B cell (primary cell): ENCODE measurements at regions of chr12 and their contacts with region 1.

Region 1: DNA sequence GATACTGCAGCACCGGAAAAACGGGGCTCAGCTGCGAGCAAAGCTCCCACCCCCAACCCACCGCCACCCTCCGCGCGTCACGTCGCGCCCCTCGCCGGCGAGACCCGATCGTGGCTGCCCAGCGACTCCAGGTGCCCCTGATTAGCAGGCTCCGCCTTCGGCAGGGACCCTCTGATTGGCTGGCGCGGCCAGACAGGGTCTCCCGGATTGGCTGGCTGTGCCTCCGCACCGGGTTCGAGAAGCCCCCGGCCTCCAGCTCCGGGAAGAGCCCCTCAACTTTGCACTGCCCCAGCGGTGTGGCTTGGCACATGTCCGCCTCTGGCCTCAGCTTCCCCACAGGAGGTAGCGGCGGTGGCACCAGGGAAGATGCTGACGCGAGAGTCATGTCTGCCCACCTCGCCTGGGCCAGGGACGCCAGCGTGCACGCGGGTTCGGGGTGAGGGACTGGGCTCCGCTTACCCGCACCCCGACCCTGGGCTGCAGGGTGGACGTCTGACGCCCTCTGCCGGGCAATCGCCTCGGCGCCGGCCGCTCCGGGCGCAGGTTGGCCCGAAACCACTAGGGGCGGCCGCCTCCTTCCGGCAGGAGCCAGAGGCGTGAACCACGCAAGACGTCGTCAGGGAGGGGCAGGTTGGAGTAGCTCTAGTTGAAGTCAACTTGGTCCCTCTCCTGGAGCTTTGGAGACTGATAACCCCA is 498 bp upstream of the RHOF start:
- DNase-seq: peak; percentile 97
- ATAC-seq: peak; percentile 53
- H3K4me3 ChIP-seq: peak overlapping the region; percentile 30 to 97 (median 92)
- H3K4me3 Mint-ChIP-seq: peak overlapping the region; percentile 88
- H3K27ac ChIP-seq: peak overlapping the region; percentile 59 to 100
- H3K27ac Mint-ChIP-seq: peak overlapping the region; percentile 90
- H3K4me1 ChIP-seq: peaks cover 50 to 72% of the 10 kb centered on the region in 2 donors
- H3K4me1 Mint-ChIP-seq: peaks cover 65% of the 10 kb centered on the region
- H3K27me3 ChIP-seq: no peaks in the 10 kb centered on the region
- H3K27me3 Mint-ChIP-seq: no peaks in the 10 kb centered on the region
- CTCF ChIP-seq: peak; percentile 95

Region 2: DNA sequence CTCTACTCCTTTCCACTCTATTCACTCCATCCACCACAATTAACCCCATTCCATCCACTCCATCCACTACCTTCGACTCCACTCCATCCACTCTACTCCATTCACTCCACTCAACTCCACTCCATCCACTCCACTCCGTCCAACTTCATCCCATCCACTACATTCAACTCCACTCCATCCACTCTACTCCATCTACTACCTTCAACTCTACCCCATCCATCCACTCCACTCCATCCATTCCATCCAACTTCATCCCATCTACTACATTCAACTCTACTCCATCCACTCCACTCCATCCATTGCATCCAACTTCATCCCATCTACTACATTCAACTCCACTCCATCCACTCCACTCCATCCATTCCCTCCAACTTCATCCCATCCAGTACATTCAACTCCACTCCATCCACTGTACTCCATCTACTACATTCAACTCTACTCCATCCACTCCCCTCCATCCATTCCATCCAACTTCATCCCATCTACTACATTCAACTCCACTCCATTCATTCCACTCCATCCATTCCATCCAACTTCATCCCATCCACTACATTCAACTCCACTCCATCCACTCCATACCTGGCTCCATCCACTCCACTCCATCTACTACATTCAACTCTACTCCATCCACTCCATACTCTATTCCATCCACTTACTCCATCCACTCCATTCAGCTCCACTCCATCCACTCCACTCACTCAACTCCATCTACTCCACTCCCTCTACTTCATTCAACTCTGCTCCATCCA is 799.2 kb before region 1 on chr12:
- CTCF ChIA-PET with region 1: no interaction called
- POLR2A ChIA-PET with region 1: no interaction called
- intact Hi-C with region 1: no loop called
- DNase-seq: no peak
- ATAC-seq: no peak
- H3K4me3 ChIP-seq: no peak overlapping the region
- H3K4me3 Mint-ChIP-seq: no peak overlapping the region
- H3K27ac ChIP-seq: no peak overlapping the region
- H3K27ac Mint-ChIP-seq: no peak overlapping the region
- H3K4me1 ChIP-seq: no peaks in the 10 kb centered on the region
- H3K4me1 Mint-ChIP-seq: no peaks in the 10 kb centered on the region
- H3K27me3 ChIP-seq: peaks cover 0 to 11% (median 0%) of the 10 kb centered on the region in 4 experiments
- H3K27me3 Mint-ChIP-seq: peaks cover 18% of the 10 kb centered on the region
- CTCF ChIP-seq: peak; percentile 9

Region 3: DNA sequence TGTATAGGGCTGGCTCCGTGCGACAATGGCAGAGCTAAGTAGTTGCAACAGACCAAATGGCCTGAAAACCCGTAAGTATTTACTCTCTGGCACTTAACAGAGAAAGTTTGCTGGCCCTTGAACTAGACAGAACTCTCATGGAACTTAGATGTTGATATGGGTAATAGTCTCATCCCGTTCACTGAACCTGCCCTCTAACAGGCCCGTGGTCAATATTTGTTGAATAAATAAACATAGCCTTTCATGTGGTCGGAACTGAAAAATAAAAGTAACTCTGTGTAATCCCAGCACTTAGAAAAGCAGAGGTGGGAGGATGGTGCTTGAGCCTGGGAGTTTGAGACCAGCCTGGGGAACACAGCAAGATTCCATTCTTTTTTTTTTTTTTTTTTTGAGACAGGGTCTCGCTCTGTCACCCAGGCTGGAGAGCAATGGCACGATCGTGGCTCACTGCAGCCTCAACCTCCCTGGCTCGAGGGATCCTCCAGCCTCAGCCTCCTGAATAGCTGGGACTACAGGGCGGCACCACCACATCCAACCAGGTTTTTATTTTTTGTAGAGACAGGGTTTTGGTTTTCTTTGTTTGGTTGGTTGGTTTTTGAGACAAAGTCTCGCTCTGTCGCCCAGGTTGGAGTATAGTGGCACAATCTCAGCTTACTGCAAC is 242.9 kb before region 1 on chr12:
- CTCF ChIA-PET with region 1: interaction called, 21 read pairs
- POLR2A ChIA-PET with region 1: interaction called, 7 read pairs
- intact Hi-C with region 1: no loop called
- DNase-seq: no peak
- ATAC-seq: no peak
- H3K4me3 ChIP-seq: no peak overlapping the region
- H3K4me3 Mint-ChIP-seq: no peak overlapping the region
- H3K27ac ChIP-seq: no peak overlapping the region
- H3K27ac Mint-ChIP-seq: no peak overlapping the region
- H3K4me1 ChIP-seq: peaks cover 0 to 3% of the 10 kb centered on the region in 2 donors
- H3K4me1 Mint-ChIP-seq: peaks cover 2% of the 10 kb centered on the region
- H3K27me3 ChIP-seq: no peaks in the 10 kb centered on the region
- H3K27me3 Mint-ChIP-seq: no peaks in the 10 kb centered on the region
- CTCF ChIP-seq: no peak

Region 4: GRCh38 chr12:121697098-121697698 is 96.8 kb before region 1 on chr12:
- CTCF ChIA-PET with region 1: interaction called, 155 read pairs
- POLR2A ChIA-PET with region 1: interaction called, 7 read pairs
- intact Hi-C with region 1: loop called (anchors 1 kb)
- DNase-seq: peak; percentile 74
- ATAC-seq: peak; percentile 47
- H3K4me3 ChIP-seq: no peak overlapping the region
- H3K4me3 Mint-ChIP-seq: no peak overlapping the region
- H3K27ac ChIP-seq: no peak overlapping the region
- H3K27ac Mint-ChIP-seq: no peak overlapping the region
- H3K4me1 ChIP-seq: peaks cover 0 to 4% of the 10 kb centered on the region in 2 donors
- H3K4me1 Mint-ChIP-seq: peaks cover 2% of the 10 kb centered on the region
- H3K27me3 ChIP-seq: no peaks in the 10 kb centered on the region
- H3K27me3 Mint-ChIP-seq: no peaks in the 10 kb centered on the region
- CTCF ChIP-seq: peak; percentile 77

Region 5: GRCh38 chr12:121773011-121773777 is 20.8 kb before region 1 on chr12:
- CTCF ChIA-PET with region 1: interaction called, 1,947 read pairs
- POLR2A ChIA-PET with region 1: interaction called, 37 read pairs
- intact Hi-C with region 1: loop called (anchors 1 kb)
- DNase-seq: peak; percentile 87
- ATAC-seq: peak; percentile 96
- H3K4me3 ChIP-seq: no peak overlapping the region
- H3K4me3 Mint-ChIP-seq: no peak overlapping the region
- H3K27ac ChIP-seq: no peak overlapping the region
- H3K27ac Mint-ChIP-seq: peak overlapping the region; percentile 82
- H3K4me1 ChIP-seq: peaks cover 15 to 25% of the 10 kb centered on the region in 2 donors
- H3K4me1 Mint-ChIP-seq: peaks cover 16% of the 10 kb centered on the region
- H3K27me3 ChIP-seq: no peaks in the 10 kb centered on the region
- H3K27me3 Mint-ChIP-seq: no peaks in the 10 kb centered on the region
- CTCF ChIP-seq: peak; percentile 87

Region 6: DNA sequence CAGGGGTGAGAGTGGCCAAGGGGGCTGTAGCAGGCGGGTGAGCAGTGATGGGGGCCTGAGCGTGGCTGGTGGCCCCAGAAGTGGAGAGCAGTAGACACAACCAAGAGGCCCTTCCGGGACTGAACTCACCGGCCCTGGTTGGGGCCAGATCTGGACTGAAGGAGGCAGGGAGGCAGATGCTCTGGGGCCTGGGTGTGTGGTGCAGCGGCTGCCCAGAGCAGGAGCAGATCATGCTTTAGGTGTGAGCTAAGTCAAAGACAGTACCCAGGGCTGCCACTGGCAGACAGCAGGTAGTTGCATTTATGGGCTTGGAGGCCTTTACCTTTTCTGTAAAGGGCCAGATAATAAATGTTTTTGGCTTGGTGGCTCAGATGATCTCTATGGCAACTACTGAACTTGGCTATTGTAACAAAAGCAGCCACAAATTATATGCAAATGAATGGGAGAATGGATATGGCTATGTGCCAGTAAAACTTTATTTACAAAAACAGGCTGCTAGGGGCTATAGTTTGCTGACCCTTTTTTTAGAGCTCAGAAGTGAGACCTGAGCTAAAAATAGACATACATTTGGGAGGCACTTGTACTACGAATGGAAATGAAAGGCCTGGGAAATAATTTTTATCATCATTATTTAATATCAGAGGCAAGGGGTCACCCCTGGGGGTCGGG is 35.4 kb after region 1 on chr12:
- CTCF ChIA-PET with region 1: interaction called, 11 read pairs
- POLR2A ChIA-PET with region 1: no interaction called
- intact Hi-C with region 1: no loop called
- DNase-seq: no peak
- ATAC-seq: no peak
- H3K4me3 ChIP-seq: no peak overlapping the region
- H3K4me3 Mint-ChIP-seq: no peak overlapping the region
- H3K27ac ChIP-seq: no peak overlapping the region
- H3K27ac Mint-ChIP-seq: peak overlapping the region; percentile 41
- H3K4me1 ChIP-seq: no peaks in the 10 kb centered on the region
- H3K4me1 Mint-ChIP-seq: no peaks in the 10 kb centered on the region
- H3K27me3 ChIP-seq: no peaks in the 10 kb centered on the region
- H3K27me3 Mint-ChIP-seq: no peaks in the 10 kb centered on the region
- CTCF ChIP-seq: no peak

Region 7: GRCh38 chr12:121894633-121895032 is 100.6 kb after region 1 on chr12:
- CTCF ChIA-PET with region 1: interaction called, 42 read pairs
- POLR2A ChIA-PET with region 1: no interaction called
- intact Hi-C with region 1: loop called (anchors 1 kb)
- DNase-seq: peak; percentile 25
- ATAC-seq: no peak
- H3K4me3 ChIP-seq: no peak overlapping the region
- H3K4me3 Mint-ChIP-seq: no peak overlapping the region
- H3K27ac ChIP-seq: no peak overlapping the region
- H3K27ac Mint-ChIP-seq: no peak overlapping the region
- H3K4me1 ChIP-seq: peaks cover 5 to 6% of the 10 kb centered on the region in 2 donors
- H3K4me1 Mint-ChIP-seq: peaks cover 16% of the 10 kb centered on the region
- H3K27me3 ChIP-seq: no peaks in the 10 kb centered on the region
- H3K27me3 Mint-ChIP-seq: no peaks in the 10 kb centered on the region
- CTCF ChIP-seq: no peak